ENCODE measurements at regions of chr2 and their contacts with region 1.

Region 1: GRCh38 chr2:32772638-32773447 is 145.0 kb downstream of the TTC27 start:
- DNase-seq: peak in 1 of 2 donors; percentile 31
- ATAC-seq: peak; percentile 52 to 81 (median 78)
- H3K4me3 ChIP-seq: no peak overlapping the region
- H3K27ac ChIP-seq: peak overlapping the region in 5 of 10 donors; percentile 34 to 62 (median 51)
- H3K4me1 ChIP-seq: peaks cover 0 to 42% (median 10%) of the 10 kb centered on the region in 9 donors
- H3K27me3 ChIP-seq: no peaks in the 10 kb centered on the region
- CTCF ChIP-seq: peak; percentile 52 to 86 (median 77)

Region 2: DNA sequence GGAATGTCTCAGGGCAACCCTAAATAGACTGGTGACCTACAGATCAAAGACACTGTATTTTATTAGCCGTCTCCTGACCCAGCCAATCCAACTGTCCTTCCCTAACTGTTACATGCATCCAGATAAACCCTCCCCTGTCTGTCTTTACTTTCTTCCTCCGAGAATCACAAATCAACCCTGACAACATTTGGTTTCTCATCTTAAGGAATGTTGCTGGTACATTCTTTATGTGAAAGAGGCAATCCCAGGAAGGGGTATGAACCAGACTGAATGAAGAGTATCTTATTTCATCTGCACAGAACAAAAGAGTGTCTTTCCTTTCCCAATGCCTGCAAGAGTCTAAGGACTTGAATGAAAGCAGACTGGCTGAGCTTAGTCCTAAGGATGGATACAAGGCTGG is 60.0 kb after region 1 on chr2:
- intact Hi-C with region 1: no loop called
- DNase-seq: no peak
- ATAC-seq: no peak
- H3K4me3 ChIP-seq: no peak overlapping the region
- H3K27ac ChIP-seq: no peak overlapping the region
- H3K4me1 ChIP-seq: peaks cover 0 to 9% (median 0%) of the 10 kb centered on the region in 9 donors
- H3K27me3 ChIP-seq: no peaks in the 10 kb centered on the region
- CTCF ChIP-seq: no peak

Region 3: DNA sequence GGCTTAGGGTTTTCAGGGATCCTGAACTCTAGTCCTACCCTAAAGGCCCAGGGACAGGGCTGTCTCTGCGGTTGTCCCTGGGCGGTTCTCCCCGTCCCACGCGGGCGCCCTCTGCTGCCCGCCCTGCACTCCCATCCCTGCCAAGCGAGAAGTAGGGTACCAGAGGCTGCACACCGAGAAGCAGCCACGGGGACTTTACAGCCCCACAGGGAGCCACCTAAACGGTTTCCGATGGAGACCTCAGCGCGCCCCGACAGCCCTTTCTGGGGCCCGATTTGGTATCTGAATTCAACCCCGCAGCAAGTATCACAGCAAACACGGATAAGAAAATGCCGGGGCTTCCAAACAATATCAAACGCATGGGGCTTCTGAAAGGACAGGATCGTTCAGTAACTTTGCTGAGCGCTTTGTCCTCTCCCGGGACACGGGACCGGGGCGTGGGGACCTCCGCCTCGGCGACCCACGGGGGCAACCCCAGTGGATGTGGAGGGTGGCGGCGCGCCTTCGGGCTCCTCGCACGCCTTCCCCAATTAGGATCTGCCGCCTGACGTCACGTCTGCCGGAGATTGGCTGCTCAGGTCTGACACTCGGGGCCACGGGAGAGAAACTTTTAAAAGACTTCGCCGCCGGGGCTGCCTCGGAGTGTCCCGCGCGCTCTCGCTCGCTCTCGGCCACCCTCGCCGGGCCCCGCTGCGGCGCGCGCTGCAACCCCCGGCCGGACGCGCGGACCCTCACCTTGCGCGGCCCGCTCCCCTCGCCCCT is 173.7 kb after region 1 on chr2 and contains the start of gene LTBP1:
- intact Hi-C with region 1: loop called in 9 of 10 experiments (anchors 1 to 10 kb)
- DNase-seq: peak; percentile 80 to 84
- ATAC-seq: peak; percentile 87 to 95 (median 91)
- H3K4me3 ChIP-seq: peak within 1 kb of the TSS; percentile 51 to 96 (median 73)
- H3K27ac ChIP-seq: peak within 1 kb of the TSS; percentile 79 to 94 (median 91)
- H3K4me1 ChIP-seq: peaks cover 0 to 33% (median 17%) of the 10 kb centered on the region in 9 donors
- H3K27me3 ChIP-seq: peaks cover 0 to 54% (median 0%) of the 10 kb centered on the region in 7 donors
- CTCF ChIP-seq: peak; percentile 62 to 89 (median 83)
- total RNA-seq, gene LTBP1: 72.4 to 164 (median 90.3) TPM

Region 4: GRCh38 chr2:33086400-33087015 is 313.7 kb after region 1 on chr2:
- intact Hi-C with region 1: loop called in 5 of 10 experiments (anchors 2 to 5 kb)
- DNase-seq: peak in 1 of 2 donors; percentile 66
- ATAC-seq: peak; percentile 41 to 63 (median 54)
- H3K4me3 ChIP-seq: no peak overlapping the region
- H3K27ac ChIP-seq: peak overlapping the region in 6 of 10 donors; percentile 2 to 59 (median 30)
- H3K4me1 ChIP-seq: peaks cover 5 to 60% (median 34%) of the 10 kb centered on the region in 9 donors
- H3K27me3 ChIP-seq: no peaks in the 10 kb centered on the region
- CTCF ChIP-seq: peak in 6 of 9 donors; percentile 23 to 55 (median 38)

Region 5: DNA sequence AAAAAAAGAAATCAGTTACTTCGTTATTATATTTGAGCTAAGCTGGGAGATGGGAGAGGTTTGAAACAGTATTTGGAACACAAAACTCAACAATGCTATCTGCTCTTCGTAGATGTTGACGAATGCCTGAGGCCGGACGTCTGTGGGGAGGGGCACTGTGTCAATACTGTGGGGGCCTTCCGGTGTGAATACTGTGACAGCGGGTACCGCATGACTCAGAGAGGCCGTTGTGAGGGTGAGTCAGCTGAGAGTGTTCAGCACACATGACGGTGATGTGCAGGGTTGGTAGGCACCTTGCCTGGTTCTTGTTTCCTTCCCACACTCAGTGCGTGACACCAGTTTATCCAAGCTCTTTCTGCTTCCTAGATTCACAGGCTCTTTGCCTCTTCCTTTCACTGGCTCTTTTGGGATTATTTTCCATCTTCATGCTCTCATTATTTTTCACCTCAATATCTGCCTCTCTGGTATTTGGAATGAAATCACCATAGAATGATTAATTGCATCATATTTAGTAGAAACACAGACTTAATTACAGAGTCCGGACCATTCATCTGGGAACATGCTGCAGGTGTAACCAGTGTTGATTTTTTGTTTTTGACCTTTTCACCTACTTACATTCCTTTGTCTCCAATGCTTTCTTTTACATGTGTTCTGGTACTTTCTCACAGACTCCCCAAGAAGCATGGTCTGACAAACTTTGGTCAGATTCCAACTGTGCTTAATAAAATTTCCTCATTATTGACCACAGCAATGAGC is 503.0 kb after region 1 on chr2:
- intact Hi-C with region 1: loop called in 5 of 10 experiments (anchors 2 to 10 kb)
- DNase-seq: peak in 1 of 2 donors; percentile 25
- ATAC-seq: peak; percentile 13 to 87 (median 58)
- H3K4me3 ChIP-seq: no peak overlapping the region
- H3K27ac ChIP-seq: peak overlapping the region in 4 of 10 donors; percentile 13 to 71 (median 51)
- H3K4me1 ChIP-seq: peaks cover 0 to 32% (median 3%) of the 10 kb centered on the region in 9 donors
- H3K27me3 ChIP-seq: no peaks in the 10 kb centered on the region
- CTCF ChIP-seq: no peak

Region 6: DNA sequence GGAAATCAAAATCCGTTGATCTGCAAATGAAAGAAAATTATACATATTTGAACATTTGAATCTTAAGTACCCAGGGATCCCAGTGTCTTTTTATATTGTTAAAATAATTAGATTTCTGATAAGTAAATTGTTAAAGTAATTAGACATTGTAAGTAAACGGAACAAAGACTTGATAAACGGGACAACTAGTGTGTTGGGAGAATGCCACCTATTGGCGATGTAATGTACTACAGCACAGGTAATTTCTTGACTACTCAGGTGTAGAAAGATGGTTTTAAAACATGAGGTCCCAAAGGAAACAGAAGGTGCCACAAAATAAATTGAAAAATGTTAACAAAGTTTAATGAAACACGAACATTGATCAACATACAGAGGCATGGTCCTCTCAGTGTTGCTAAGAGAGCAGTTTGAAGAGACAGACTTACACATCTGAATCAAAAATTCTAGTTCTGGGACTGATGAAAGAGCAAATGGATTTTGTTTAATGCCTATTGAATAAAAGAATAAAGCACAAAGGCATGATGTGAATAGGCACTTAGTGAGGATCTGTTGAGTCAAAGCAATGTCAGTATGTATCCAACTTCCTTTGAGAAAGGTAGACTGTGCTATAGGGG is 600.2 kb after region 1 on chr2:
- intact Hi-C with region 1: loop called in 2 of 10 experiments (anchors 10 kb)
- DNase-seq: peak in 1 of 2 donors; percentile 16
- ATAC-seq: no peak
- H3K4me3 ChIP-seq: no peak overlapping the region
- H3K27ac ChIP-seq: no peak overlapping the region
- H3K4me1 ChIP-seq: peaks cover 0 to 17% (median 0%) of the 10 kb centered on the region in 9 donors
- H3K27me3 ChIP-seq: no peaks in the 10 kb centered on the region
- CTCF ChIP-seq: peak; percentile 50 to 83 (median 80)

Region 7: DNA sequence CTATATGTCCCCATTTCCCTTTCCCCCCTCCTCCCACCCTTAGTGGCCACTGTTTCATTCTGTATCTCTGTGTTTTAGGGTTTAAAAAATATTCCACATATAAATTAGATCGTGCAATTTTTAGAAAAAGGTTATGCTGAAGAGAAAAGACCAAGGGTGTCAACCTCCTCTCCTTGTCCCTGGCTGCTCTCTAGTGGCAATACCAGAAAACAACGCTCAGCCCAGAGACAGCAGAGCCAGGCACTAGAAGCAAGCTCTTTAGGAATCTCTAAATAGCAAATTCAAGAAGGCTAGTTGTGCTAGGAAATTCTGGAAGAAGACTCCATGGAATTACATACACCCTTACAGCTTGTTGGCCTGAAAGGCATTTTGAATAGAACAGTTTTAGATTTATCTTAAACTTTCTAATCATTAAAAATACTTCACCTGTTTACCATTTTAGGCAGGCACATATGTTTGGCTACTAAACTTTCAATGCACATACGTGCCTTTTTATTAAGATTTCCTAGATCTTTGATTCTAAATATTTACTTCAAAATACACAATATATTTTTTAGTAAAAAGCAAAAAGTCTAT is 668.5 kb after region 1 on chr2:
- intact Hi-C with region 1: loop called in 1 of 10 experiments (anchors 10 kb)
- DNase-seq: peak in 1 of 2 donors; percentile 72
- ATAC-seq: peak; percentile 57 to 89 (median 83)
- H3K4me3 ChIP-seq: no peak overlapping the region
- H3K27ac ChIP-seq: peak overlapping the region in 5 of 10 donors; percentile 8 to 82 (median 75)
- H3K4me1 ChIP-seq: peaks cover 0 to 69% (median 24%) of the 10 kb centered on the region in 9 donors
- H3K27me3 ChIP-seq: no peaks in the 10 kb centered on the region
- CTCF ChIP-seq: peak; percentile 46 to 85 (median 67)

Region 8: GRCh38 chr2:33583194-33583938 is 810.5 kb after region 1 on chr2:
- intact Hi-C with region 1: loop called in 5 of 10 experiments (anchors 10 kb)
- DNase-seq: peak in 1 of 2 donors; percentile 27
- ATAC-seq: peak in 4 of 8 donors; percentile 41 to 67 (median 50)
- H3K4me3 ChIP-seq: no peak overlapping the region
- H3K27ac ChIP-seq: peak overlapping the region in 2 of 10 donors; percentile 3 to 32
- H3K4me1 ChIP-seq: peaks cover 0 to 27% (median 13%) of the 10 kb centered on the region in 9 donors
- H3K27me3 ChIP-seq: no peaks in the 10 kb centered on the region
- CTCF ChIP-seq: peak; percentile 73 to 89 (median 81)

Measured in heart right ventricle (tissue), 16 donors.